HEK293 (cell line): ENCODE measurements at regions of chr19 and their contacts with region 1.

Region 1: DNA sequence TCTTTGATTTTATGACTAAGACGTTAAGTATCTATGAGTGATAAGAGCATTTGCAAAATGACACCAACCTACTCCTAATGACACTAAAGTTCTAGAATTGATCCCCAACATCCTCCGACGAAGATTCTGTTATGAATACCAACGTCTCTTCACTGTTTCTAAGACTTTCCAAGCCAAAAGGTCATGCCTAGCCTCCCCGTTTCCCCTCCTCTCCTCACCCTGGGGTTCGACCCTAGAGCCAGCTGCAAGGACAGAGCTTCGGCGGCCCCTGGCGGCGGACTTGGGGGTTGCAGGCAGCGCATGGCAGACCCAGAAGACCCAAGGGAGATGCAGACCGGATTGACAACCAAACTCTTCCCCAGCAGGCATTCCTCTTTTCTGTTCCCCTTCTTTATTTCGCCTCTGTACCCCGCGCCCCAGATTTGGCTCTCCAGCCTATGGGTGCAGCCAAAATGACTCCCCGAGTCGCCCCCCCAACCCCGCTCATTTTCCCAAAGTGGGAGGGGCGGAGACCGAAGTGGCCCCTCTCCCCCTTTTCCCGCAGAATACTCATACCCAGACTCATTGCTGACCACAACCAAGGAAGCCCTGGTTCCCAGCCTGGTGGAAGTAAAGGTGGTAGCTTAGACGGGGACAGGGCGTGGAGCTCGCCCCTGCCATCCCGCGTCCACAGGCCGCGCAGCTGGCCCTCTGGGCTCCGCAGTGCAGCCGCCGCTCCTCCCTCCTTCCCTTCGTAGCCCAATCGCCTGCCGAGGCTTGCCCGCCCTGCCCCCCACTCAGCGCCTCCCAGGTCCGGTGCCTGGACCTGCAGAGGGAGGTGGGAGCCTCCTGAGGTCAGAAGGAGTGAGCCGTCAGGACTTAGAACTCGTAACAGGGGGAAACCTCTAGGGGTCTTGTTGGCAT is 4.1 kb upstream of the EML2 start:
- H3K4me3 ChIP-seq: no peak overlapping the region
- H3K27ac ChIP-seq: no peak overlapping the region
- H3K4me1 ChIP-seq: peaks cover 12% of the 10 kb centered on the region
- CTCF ChIP-seq: peak; percentile 95

Region 2: GRCh38 chr19:45439569-45440254 is 203.6 kb before region 1 on chr19:
- CTCF ChIA-PET with region 1: interaction called, 34 read pairs
- POLR2A ChIA-PET with region 1: interaction called, 3 read pairs
- H3K4me3 ChIP-seq: peak overlapping the region; percentile 54
- H3K27ac ChIP-seq: peak overlapping the region; percentile 40; the same call in 1 of the 2 replicates
- H3K4me1 ChIP-seq: 0 out of 2 replicates have a peak, but pooled peaks cover 4% of the 10 kb centered on the region
- CTCF ChIP-seq: peak; percentile 67

Region 3: DNA sequence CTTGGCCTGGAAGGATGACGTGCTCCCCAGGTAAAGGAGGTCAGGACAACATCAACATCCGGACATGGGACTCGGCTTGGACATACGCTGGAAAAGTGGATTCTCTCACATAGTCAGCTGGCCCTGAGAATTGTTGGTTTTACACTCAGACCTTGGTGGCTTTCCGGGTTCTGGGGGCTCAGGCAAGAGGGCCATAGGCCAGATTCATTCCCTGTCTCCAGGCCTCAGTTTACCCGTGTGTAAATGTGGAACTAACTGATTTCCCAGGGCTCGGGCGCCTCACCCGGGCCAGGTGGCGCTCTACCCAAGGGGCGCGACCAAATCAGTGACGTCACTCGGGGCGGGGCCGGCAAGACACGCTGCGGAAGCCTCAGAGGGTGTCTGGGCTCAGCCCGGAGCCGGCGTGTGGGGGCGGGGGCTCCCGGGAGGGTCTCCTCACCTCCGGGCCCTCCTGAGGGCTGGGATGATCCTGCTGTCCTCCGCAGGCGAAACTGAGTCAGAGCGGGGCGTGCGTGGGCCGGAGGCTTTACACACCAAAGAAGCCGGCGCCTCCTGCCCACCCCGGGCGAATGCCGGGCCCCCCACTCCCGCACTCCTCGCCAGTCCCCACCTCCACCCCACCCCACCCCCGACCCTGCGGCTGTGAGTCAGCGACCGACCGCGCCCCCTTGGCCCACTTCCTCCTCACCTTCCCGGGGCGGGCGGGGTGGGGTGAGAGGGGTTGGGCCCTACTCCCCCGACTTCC is 136.9 kb before region 1 on chr19:
- CTCF ChIA-PET with region 1: interaction called, 10 read pairs
- POLR2A ChIA-PET with region 1: no interaction called
- H3K4me3 ChIP-seq: peak overlapping the region; percentile 87
- H3K27ac ChIP-seq: peak overlapping the region; percentile 67
- H3K4me1 ChIP-seq: peaks cover 15% of the 10 kb centered on the region
- CTCF ChIP-seq: peak; percentile 94

Region 4: DNA sequence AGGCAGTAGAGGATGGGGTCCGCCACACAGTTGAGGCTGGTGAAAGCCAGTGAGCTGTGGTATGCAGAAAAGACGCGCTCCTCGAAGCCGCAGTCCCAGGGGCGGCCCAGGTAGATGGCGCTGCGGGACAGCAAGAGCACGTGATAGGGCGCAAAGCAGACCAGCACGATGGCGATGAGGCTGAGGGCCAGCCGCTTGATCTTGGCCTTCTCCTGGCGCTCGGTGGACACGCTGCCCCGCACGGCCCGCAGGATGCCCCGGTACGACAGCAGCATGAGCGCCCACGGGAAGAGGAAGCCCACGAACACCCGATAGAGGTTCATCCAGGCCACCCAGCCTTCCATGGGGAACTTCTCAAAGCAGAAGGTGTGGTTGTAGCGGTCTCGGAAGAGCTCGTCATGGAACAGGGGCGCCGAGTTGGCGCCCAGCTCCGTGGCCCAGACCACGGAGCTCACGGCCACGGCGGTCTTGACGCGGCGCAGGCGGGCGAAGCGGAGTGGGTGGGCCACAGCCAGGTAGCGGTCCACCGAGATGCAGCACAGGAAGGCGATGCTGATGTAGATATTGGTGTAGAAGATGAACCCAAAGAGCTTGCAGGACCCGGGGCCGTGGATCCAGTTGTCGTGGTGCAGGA is 52.2 kb before region 1 on chr19:
- CTCF ChIA-PET with region 1: interaction called, 36 read pairs
- POLR2A ChIA-PET with region 1: interaction called, 3 read pairs
- H3K4me3 ChIP-seq: no peak overlapping the region
- H3K27ac ChIP-seq: no peak overlapping the region
- H3K4me1 ChIP-seq: no peaks in the 10 kb centered on the region
- CTCF ChIP-seq: no peak

Region 5: DNA sequence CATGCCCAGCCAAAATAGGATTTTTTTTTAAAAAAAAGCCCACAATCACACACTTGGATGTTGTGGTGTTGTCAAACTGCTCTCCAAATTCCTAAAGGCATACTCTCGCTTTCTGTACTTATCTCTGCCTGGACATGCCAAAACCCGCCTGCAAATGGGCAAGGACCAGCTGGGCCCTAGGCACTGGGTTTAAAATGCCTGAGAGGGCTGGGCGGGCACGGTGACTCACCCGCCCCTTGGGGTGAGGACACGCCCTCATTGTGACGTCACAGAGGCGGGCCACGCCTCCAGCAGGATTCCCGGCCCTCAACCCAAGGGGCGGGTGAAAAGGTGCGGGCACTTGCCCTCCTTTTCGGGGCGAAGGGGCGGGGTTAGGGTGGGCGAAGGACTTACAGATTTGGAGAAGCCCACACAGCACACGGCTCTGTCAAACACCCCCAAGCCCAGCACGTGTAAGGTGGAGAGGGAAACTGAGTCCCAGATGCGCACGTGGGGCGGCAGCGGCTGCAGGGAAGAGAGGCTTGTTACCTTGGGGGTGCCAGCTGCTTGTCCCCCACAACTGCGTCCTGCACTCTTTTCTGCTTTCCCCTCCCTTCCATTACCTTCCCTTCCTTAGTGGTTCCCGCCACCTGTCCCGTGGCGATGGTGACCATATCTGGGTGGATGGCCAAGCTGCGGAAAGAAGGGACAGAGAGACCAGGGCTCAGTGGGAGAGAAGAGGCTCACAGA is 10.6 kb before region 1 on chr19:
- CTCF ChIA-PET with region 1: interaction called, 52 read pairs
- POLR2A ChIA-PET with region 1: interaction called, 38 read pairs
- H3K4me3 ChIP-seq: no peak overlapping the region
- H3K27ac ChIP-seq: no peak overlapping the region
- H3K4me1 ChIP-seq: peaks cover 13% of the 10 kb centered on the region
- CTCF ChIP-seq: no peak

Region 6: DNA sequence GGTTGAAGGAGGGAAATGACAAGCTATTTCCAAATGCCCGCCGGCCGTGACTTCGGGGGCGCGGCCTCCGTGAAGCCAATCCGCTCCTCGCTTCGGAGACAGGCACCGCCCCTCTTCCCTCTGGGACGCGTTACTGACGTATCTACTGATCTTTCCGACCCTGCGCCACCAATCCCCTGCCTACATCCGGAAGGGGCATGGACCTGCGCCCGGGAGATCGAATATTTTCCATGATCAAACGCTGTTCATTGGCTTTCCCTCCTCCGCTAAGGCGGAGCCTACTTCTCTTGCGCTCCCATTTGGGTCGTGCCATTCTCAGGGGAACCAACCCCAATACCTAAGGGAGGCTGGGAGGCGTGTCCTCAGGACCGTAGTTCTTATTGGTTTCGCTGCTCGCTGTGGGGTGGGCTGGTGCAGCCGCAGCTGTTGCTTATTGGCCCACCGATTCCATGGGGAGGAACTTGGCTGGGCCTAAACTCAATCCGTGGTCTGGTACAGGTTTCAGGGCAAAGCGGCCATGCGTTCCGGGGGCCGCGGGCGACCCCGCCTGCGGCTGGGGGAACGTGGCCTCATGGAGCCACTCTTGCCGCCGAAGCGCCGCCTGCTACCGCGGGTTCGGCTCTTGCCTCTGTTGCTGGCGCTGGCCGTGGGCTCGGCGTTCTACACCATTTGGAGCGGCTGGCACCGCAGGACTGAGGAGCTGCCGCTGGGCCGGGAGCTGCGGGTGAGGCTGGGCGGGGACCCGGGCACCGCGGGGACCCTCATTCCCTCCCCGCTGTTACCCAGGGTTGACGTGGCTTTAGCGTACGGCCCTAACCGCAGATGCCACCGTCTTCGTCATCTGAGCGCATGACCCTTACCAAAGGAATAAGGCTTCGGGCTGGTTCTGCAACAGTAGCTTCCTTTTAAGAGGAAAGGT is 49.2 kb after region 1 on chr19 and contains the start of gene QPCTL:
- CTCF ChIA-PET with region 1: interaction called, 12 read pairs
- POLR2A ChIA-PET with region 1: interaction called, 15 read pairs
- H3K4me3 ChIP-seq: peak within 1 kb of the TSS; percentile 82
- H3K27ac ChIP-seq: peak within 1 kb of the TSS; percentile 93
- H3K4me1 ChIP-seq: no peaks in the 10 kb centered on the region; the same call in 1 of the 2 replicates
- CTCF ChIP-seq: no peak

Region 7: GRCh38 chr19:45742969-45743368 is 99.7 kb after region 1 on chr19:
- CTCF ChIA-PET with region 1: no interaction called
- POLR2A ChIA-PET with region 1: no interaction called
- H3K4me3 ChIP-seq: no peak overlapping the region
- H3K27ac ChIP-seq: no peak overlapping the region
- H3K4me1 ChIP-seq: no peaks in the 10 kb centered on the region
- CTCF ChIP-seq: no peak